ENCODE measurements at regions of chr12 and their contacts with region 1.

Region 1: DNA sequence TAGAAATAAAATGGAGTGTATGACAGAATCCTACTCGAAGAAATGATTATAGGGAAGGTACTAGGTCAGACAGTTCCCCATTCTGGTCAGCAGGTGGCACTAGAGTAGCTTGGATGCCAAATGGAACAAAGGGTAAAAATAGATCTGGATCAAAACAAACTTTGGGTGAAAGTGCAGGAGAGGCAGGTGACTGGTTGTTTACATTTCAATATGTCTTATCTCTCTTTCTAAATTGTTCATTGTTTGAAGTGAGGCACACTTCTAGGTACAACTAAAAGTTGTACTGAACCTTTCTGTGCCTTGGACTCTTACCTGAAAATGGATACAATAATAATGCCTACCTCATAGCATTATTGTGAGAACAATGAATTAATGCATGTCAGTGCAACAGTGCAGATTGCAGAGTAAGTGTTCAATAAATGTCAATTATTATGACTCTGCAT is 62.0 kb upstream of the OSBPL8 start:
- DNase-seq: no peak

Region 2: DNA sequence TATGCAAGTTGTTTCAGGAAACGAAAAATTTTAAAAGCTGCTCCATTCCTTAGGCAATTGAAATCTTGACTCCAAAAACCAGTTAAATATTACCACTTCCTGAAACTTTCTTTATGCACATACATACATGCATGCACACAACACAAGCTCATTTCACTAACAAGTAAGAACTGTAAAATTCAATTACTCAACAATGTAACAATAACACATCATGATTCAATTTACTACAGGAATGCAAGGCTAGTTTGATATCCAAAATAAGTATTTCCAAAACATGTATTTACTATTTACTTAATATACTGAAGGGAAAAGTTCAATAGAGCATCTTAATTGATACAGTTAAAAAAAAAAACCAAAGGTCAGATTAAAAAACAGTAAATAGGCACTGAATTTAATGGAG is 556.7 kb before region 1 on chr12:
- intact Hi-C with region 1: no loop called
- DNase-seq: no peak

Region 3: GRCh38 chr12:76784600-76785051 is 163.0 kb after region 1 on chr12:
- intact Hi-C with region 1: loop called in 1 of 2 experiments (anchors 5 kb)
- DNase-seq: no peak

Region 4: DNA sequence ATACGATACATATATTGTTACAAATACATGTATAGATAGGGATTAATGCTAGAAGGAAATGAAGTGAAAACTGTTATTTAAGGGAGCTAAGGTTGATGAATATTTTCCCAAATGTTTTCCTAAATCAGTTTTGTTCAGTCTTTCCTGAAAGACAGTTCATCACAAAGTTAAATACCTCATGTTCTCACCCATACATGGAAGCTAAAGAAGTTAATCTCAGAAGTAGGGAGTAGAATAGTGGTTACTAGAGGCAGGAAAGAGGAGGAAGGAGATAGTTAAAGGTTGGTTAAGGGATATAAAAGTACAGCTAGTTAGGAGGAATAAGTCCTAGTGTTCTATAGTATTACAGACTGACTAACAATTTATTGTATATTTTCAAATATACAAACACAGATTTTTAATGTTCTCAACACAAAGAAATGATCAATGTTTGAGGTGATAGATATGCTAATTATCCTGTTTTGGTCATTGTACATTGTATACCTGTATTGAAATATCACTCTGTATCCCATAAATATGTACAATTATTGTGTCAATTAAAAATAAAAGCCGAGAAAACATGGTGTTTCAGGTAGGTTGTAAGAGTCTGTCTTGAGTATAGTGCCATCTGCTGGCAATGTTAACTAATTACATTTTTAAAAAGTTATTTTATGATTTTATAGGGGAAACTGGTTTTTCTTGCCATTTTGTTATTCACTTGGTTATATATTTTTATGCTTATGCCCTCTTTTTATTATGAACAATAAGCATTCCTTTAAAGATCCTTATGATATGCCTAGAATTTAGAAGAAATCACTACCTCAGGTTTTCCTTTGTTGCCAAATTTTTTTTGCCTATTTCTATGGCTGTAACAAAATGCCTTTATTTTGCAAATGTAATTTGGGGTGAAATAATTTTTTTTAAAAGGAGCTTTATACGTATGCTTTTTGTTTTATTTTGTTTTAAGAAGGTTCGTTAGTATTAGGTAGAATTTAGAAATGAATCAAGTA is 169.3 kb after region 1 on chr12:
- intact Hi-C with region 1: loop called (anchors 5 to 10 kb)
- DNase-seq: no peak

Region 5: DNA sequence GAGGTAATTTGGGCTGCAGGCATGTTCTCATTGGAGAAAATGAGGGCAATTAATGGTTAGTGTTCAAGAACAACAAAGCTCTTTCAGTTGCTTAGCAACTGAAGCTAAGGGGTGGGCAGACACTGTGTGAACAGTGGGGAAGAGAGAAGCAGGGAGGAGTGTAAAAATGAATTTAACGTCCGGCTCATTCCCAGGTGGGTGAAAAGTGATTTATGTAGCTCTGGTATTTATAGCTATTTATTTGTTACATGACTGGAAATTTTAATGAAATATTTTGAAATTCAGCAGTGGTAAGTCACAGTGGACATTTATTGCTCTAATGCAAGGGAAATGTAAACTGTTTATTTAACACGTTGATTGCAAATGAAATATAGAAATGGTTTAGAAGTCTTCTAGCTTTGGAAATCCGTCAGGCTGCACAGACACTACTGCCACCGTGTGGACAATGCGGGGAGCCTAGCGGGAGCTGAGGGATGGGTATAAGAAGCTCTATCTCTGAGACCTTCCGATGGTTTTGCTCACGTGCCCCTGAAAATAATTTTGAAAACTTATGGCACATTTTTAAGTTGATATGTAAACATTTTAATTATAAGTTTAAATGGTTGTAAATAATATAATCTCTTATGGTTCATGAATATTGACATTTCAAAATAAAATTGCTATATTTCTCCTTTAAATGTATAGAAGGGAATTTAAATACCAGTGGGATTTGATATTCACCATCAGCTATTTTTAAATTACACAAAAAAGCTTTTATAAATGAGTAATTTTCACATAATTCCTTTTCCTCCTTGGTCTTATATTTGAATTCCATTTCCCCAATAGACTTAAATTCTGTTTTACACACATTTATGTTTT is 389.3 kb after region 1 on chr12:
- intact Hi-C with region 1: loop called in 1 of 2 experiments (anchors 5 kb)
- DNase-seq: peak; percentile 91

Measured in posterior vena cava (tissue), 2 donors.